IMR-90 (cell line): ENCODE measurements at regions of chr15 and their contacts with region 1.

Region 1: DNA sequence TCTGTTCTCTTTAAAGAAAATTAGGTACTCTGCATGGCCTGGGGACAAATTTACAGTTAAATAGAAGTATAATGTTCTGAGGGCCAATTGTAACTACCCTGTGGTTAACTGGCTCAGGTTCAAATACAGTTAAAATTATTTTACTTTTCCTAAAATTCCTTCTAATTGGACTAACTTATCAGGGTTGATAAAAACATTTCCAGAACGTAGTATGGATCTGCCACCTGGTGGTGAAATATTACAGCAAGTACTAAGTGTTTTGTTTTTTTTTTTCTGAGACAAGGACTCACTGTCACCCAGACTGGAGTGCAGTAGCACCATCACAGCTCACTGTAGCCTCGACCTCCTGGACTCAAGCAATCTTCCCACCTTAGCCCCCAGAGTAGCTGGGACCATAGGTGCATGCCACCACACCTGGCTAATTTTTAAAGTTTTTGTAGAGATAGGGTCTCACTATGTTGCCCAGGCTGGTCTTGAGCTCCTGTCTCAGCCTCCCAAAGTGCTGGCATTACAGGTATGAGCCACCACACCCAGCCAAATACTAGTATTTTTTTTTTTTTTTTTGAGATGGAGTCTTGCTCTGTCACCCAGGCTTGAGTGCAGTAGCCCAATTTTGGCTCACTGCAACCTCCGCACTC is 29.2 kb downstream of the NEO1 start:
- DNase-seq: peak; percentile 71
- ATAC-seq: no peak
- H3K4me3 ChIP-seq: no peak overlapping the region
- H3K27ac ChIP-seq: no peak overlapping the region
- H3K4me1 ChIP-seq: peaks cover 3% of the 10 kb centered on the region
- H3K27me3 ChIP-seq: no peaks in the 10 kb centered on the region
- CTCF ChIP-seq: peak; percentile 82
- POLR2A ChIP-seq: 0 out of 2 replicates have a peak, but pooled peaks have one; percentile 37
- RAD21 ChIP-seq: peak; percentile 89

Region 2: DNA sequence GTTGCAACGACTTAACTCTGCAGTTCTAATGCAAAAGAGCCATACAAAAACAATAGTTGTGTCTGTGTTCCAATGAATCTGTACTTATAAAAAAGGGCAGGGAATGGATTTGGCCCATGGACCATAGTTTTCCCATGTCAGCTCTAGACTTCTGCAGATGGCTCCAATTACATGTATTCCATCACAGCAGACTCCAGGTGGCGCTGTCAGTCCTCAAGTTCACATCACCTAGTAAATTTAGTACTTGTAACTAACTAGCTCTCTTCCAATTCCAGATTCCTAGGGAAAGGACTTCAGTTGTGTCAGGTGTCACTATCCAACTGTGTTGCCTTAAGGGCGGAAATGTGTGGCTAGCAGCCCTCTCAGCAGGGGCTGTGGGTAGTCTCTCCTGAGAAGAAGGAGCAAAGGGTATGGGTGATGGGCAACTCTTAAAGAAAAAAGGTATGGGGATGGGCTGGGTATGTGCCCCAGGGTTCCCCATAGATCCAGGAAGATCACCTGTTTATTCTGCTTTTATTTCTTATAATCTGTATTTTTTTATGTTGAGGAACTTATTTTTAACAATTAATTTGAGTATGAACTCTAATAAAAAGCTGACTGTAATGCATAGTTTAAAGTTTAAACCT is 359.3 kb before region 1 on chr15:
- CTCF ChIA-PET with region 1: no interaction called
- POLR2A ChIA-PET with region 1: no interaction called
- dilution Hi-C with region 1: no loop called
- in situ Hi-C with region 1: loop called (anchors 10 kb)
- intact Hi-C with region 1: loop called (anchors 1 kb)
- DNase-seq: peak; percentile 80
- ATAC-seq: peak; percentile 87
- H3K4me3 ChIP-seq: no peak overlapping the region
- H3K27ac ChIP-seq: no peak overlapping the region
- H3K4me1 ChIP-seq: no peaks in the 10 kb centered on the region
- H3K27me3 ChIP-seq: no peaks in the 10 kb centered on the region
- CTCF ChIP-seq: peak; percentile 87
- POLR2A ChIP-seq: no peak
- RAD21 ChIP-seq: peak; percentile 78

Region 3: DNA sequence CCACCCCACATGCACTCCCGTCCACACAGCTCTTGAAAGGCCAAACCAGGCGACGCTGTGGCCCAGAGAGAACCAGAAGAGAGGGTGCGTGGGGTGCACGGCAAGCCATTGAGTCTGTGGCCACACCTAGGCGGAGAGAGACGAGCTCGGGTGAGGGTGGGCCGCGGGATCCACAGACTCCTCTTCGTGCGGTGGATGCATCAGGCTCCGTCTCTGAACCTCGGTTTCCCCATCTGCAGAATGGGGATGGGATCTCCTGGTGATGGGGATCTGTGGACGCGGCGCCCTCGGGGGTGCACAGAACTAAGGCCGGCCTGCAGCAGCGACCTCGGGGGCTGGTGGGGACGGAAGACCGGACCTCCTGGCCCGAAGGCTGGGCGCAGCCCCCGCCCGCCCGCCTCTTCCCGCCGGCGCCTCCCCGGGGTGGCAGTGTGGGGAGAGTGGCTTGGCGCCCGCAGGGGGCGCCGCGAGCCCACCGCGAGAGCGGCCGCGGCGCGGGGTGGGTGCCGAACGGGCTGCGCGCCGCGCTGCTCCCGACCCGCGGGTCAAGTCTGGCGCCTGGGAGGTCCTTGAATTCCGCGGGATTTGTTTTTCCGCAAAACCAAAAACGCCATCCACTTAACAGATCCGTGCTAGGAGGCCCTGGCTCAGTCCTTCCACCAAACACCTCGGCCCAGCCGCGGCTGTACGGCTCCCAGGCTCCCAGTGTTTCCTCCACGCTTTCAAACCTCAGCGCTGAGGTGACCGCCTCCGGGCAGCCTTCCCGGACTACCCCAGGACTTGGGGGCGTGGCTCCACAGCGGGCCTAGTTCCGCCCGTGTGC is 284.7 kb before region 1 on chr15:
- CTCF ChIA-PET with region 1: interaction called, 3 read pairs
- POLR2A ChIA-PET with region 1: no interaction called
- dilution Hi-C with region 1: no loop called
- in situ Hi-C with region 1: no loop called
- intact Hi-C with region 1: loop called (anchors 1 kb)
- DNase-seq: peak; percentile 16
- ATAC-seq: peak; percentile 91
- H3K4me3 ChIP-seq: peak overlapping the region; percentile 53
- H3K27ac ChIP-seq: no peak overlapping the region; the same call in 1 of the 2 replicates
- H3K4me1 ChIP-seq: peaks cover 12% of the 10 kb centered on the region
- H3K27me3 ChIP-seq: no peaks in the 10 kb centered on the region; the same call in 1 of the 2 replicates
- CTCF ChIP-seq: peak; percentile 73
- POLR2A ChIP-seq: no peak
- RAD21 ChIP-seq: peak; percentile 84

Region 4: GRCh38 chr15:72902245-72902918 is 179.1 kb before region 1 on chr15:
- CTCF ChIA-PET with region 1: no interaction called
- POLR2A ChIA-PET with region 1: no interaction called
- dilution Hi-C with region 1: no loop called
- in situ Hi-C with region 1: no loop called
- intact Hi-C with region 1: loop called (anchors 10 kb)
- DNase-seq: peak; percentile 74
- ATAC-seq: peak; percentile 98
- H3K4me3 ChIP-seq: no peak overlapping the region
- H3K27ac ChIP-seq: no peak overlapping the region
- H3K4me1 ChIP-seq: peaks cover 8% of the 10 kb centered on the region
- H3K27me3 ChIP-seq: no peaks in the 10 kb centered on the region
- CTCF ChIP-seq: no peak
- POLR2A ChIP-seq: no peak
- RAD21 ChIP-seq: no peak

Region 5: GRCh38 chr15:74235962-74236361 is 1154.5 kb after region 1 on chr15 and contains the start of gene CCDC33:
- CTCF ChIA-PET with region 1: no interaction called
- POLR2A ChIA-PET with region 1: no interaction called
- dilution Hi-C with region 1: no loop called
- in situ Hi-C with region 1: no loop called
- intact Hi-C with region 1: no loop called
- DNase-seq: no peak
- ATAC-seq: no peak
- H3K4me3 ChIP-seq: no peak within 1 kb of the TSS
- H3K27ac ChIP-seq: no peak within 1 kb of the TSS
- H3K4me1 ChIP-seq: peaks cover 3% of the 10 kb centered on the region; the same call in 1 of the 2 replicates
- H3K27me3 ChIP-seq: peaks cover 42% of the 10 kb centered on the region
- CTCF ChIP-seq: no peak
- POLR2A ChIP-seq: no peak
- RAD21 ChIP-seq: no peak
- total RNA-seq, gene CCDC33: not detected in 2 replicates